HEK293T (cell line): ENCODE measurements at regions of chr1 and their contacts with region 1.

Region 1: GRCh38 chr1:91864017-91864700 is 21.8 kb downstream of the TGFBR3 start:
- DNase-seq: peak; percentile 49

Region 2: DNA sequence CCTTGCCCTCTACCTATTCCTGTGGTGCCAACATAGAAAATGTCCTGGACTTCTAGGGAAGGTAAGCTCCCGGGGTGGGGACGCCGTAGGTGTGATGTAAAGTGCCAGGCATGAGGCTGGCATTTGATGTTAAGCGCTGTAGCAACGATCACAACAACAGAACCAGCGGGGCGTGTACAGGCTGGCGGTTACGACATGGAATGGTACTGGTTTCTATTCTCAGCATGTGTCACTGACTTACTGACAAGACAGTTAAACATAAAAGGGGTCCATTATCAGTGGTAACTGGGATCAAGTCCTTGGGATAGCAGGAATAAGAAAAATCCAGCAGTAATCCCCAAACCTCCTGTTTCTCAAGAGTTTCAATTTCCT is 37.1 kb before region 1 on chr1:
- CTCF ChIA-PET with region 1: no interaction called
- POLR2A ChIA-PET with region 1: no interaction called
- DNase-seq: no peak

Region 3: GRCh38 chr1:91846007-91846617 is 18.0 kb before region 1 on chr1:
- CTCF ChIA-PET with region 1: interaction called, 3 read pairs
- POLR2A ChIA-PET with region 1: interaction called, 12 read pairs
- DNase-seq: peak; percentile 70

Region 4: GRCh38 chr1:91891969-91892368 is 27.8 kb after region 1 on chr1:
- CTCF ChIA-PET with region 1: no interaction called
- POLR2A ChIA-PET with region 1: no interaction called
- DNase-seq: no peak

Region 5: GRCh38 chr1:91948097-91948496 is 83.9 kb after region 1 on chr1:
- CTCF ChIA-PET with region 1: no interaction called
- POLR2A ChIA-PET with region 1: no interaction called
- DNase-seq: no peak